Brain microvascular endothelial cell (primary cell): ENCODE measurements at regions of chr9 and their contacts with region 1.

Region 1: GRCh38 chr9:113657703-113658544 is 194.4 kb downstream of the RGS3 start:
- DNase-seq: peak; percentile 81
- H3K4me3 ChIP-seq: no peak overlapping the region
- H3K27ac ChIP-seq: no peak overlapping the region
- H3K27me3 ChIP-seq: no peaks in the 10 kb centered on the region
- CTCF ChIP-seq: peak; percentile 96

Region 2: DNA sequence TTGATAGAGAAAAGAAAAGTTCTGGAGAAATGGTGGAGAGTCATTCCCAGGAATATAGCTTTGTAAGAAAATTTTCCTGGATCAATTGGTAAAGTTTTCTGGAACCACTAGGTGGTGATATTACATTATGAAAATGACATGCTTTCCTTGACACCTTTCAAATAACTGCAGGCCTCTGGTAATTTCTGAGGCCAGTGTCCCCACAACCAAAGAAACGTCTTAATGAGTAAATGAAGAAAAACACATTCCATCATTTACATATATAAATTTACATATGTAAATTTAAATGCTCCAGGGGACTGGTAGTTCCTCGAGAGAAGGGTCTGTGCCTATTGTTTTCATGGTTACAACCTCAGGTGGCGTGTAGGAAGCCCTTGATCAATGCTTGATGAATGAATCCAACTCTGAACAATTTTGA is 211.6 kb before region 1 on chr9:
- in situ Hi-C with region 1: loop called (anchors 10 kb)
- DNase-seq: no peak
- H3K4me3 ChIP-seq: no peak overlapping the region
- H3K27ac ChIP-seq: no peak overlapping the region
- H3K27me3 ChIP-seq: no peaks in the 10 kb centered on the region
- CTCF ChIP-seq: peak; percentile 29

Region 3: GRCh38 chr9:113581865-113582697 is 75.8 kb before region 1 on chr9:
- in situ Hi-C with region 1: loop called (anchors 10 kb)
- DNase-seq: peak; percentile 46
- H3K4me3 ChIP-seq: no peak overlapping the region
- H3K27ac ChIP-seq: no peak overlapping the region
- H3K27me3 ChIP-seq: no peaks in the 10 kb centered on the region
- CTCF ChIP-seq: peak; percentile 58